HCT116 (cell line): ENCODE measurements at regions of chr20 and their contacts with region 1.

Region 1: DNA sequence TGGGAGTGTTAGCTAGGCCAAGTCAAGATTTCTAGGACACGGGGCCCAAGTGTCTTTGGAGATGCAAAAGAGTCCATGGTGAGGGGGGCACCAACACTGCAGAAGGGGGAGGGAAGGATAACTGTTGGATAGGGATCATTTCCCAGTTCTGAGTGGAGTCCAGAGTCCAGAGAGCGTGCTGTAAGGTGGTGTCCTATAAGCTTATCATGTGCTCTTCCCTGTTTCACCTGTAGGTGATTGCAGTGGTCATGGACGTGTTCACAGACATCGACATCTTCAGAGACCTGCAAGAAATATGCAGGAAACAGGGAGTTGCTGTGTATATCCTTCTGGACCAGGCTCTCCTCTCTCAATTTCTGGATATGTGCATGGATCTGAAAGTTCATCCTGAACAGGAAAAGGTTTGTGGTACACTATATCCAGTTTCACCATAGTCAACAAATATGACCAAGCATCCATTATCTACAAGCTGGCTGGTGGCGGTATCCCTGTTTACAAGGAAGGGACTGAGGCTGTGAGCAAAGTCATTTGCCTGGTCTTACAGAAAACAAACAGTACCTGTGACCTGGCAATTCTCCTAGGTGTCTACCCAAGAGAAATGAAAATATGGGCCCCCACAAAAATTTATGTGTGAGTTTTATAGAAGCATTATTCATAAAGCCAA is 15.6 kb downstream of the FAM83D start:
- DNase-seq: no peak
- ATAC-seq: peak; percentile 78
- H3K4me3 ChIP-seq: no peak overlapping the region
- H3K27ac ChIP-seq: no peak overlapping the region; the same call in 1 of the 2 replicates
- H3K4me1 ChIP-seq: no peaks in the 10 kb centered on the region
- H3K27me3 ChIP-seq: no peaks in the 10 kb centered on the region
- CTCF ChIP-seq: peak in 2 of 3 experiments; percentile 16 to 33; a peak in 3 of 6 replicates
- POLR2A ChIP-seq: no peak
- RAD21 ChIP-seq: no peak

Region 2: DNA sequence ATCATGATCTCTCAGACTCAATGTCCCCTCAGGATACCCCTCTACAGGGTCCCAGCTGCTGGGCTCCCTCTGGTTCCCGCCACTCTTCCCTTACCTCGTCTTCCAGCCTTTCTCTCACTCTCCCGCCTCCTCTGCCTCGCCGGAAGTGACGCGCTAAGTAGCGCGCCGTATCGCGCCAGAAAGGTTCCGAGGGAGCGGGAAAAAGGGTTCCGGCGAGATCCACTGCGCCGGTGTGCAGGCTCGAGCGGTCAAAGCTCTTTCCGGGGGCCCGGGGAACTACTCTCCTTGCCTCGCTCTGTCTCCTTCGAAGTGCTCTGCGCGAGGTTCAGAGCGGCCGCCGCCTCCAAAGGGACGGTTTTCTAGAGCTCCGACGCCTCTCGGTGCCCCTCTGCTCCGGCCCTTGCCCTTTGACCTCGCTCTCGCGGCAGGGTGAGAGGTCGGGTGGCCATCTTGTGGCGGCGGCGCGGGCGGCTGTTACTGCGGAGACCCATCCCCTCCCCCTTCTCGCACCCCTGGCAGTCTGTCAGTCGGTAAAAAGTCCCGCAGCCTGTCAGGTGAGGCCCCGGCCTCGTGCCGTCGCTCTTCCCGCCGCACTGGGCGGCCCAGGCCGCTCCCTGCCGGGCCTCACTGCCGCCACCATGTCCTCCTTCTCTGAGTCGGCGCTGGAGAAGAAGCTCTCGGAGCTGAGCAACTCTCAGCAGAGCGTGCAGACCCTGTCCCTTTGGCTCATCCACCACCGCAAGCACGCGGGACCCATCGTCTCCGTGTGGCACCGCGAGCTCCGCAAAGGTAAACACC is 908.3 kb before region 1 on chr20 and contains the starts of genes RPRD1B and TTI1:
- CTCF ChIA-PET with region 1: no interaction called
- POLR2A ChIA-PET with region 1: no interaction called
- RAD21 ChIA-PET with region 1: no interaction called
- intact Hi-C with region 1: no loop called
- DNase-seq: peak; percentile 80
- ATAC-seq: peak; percentile 85
- H3K4me3 ChIP-seq: peak within 1 kb of the TSS; percentile 93 to 95
- H3K27ac ChIP-seq: peak within 1 kb of the TSS; percentile 86
- H3K4me1 ChIP-seq: peaks cover 12 to 25% of the 10 kb centered on the region in 2 experiments; a peak in 3 of 4 replicates
- H3K27me3 ChIP-seq: no peaks in the 10 kb centered on the region
- CTCF ChIP-seq: no peak
- POLR2A ChIP-seq: peak; percentile 75
- RAD21 ChIP-seq: no peak
- total RNA-seq, gene RPRD1B: 30.7 TPM
- total RNA-seq, gene TTI1: 26.9 TPM

Region 3: GRCh38 chr20:38926142-38926933 is 15.5 kb before region 1 on chr20 and contains the start of gene FAM83D:
- CTCF ChIA-PET with region 1: interaction called, 4 read pairs
- POLR2A ChIA-PET with region 1: interaction called, 10 read pairs
- RAD21 ChIA-PET with region 1: no interaction called
- intact Hi-C with region 1: no loop called
- DNase-seq: peak; percentile 97
- ATAC-seq: peak; percentile 91
- H3K4me3 ChIP-seq: peak within 1 kb of the TSS; percentile 93 to 94
- H3K27ac ChIP-seq: peak within 1 kb of the TSS; percentile 83
- H3K4me1 ChIP-seq: peaks cover 8 to 31% of the 10 kb centered on the region in 2 experiments
- H3K27me3 ChIP-seq: peaks cover 4% of the 10 kb centered on the region; the same call in 1 of the 2 replicates
- CTCF ChIP-seq: no peak; a peak in 2 of 6 replicates
- POLR2A ChIP-seq: peak; percentile 94
- RAD21 ChIP-seq: peak; percentile 76
- total RNA-seq, gene FAM83D: 51.1 TPM